ENCODE measurements at regions of chr14 and their contacts with region 1.

Region 1: GRCh38 chr14:69574263-69574953 is at the start of gene CCDC177:
- DNase-seq: peak; percentile 51
- H3K4me3 ChIP-seq: no peak within 1 kb of the TSS
- H3K27ac ChIP-seq: no peak within 1 kb of the TSS
- H3K4me1 ChIP-seq: peaks cover 9% of the 10 kb centered on the region
- H3K27me3 ChIP-seq: peaks cover 53 to 78% of the 10 kb centered on the region in 2 experiments
- CTCF ChIP-seq: peak; percentile 77 to 84
- POLR2A ChIP-seq: no peak
- total RNA-seq, gene CCDC177: not detected in 2 replicates

Region 2: GRCh38 chr14:69242311-69243224 is 331.8 kb before region 1 on chr14:
- CTCF ChIA-PET with region 1: interaction called, 22 read pairs
- POLR2A ChIA-PET with region 1: no interaction called
- dilution Hi-C with region 1: no loop called
- intact Hi-C with region 1: loop called (anchors 1 kb)
- DNase-seq: peak; percentile 71
- H3K4me3 ChIP-seq: no peak overlapping the region
- H3K27ac ChIP-seq: no peak overlapping the region
- H3K4me1 ChIP-seq: no peaks in the 10 kb centered on the region
- H3K27me3 ChIP-seq: no peaks in the 10 kb centered on the region
- CTCF ChIP-seq: peak; percentile 59 to 60
- POLR2A ChIP-seq: no peak

Region 3: DNA sequence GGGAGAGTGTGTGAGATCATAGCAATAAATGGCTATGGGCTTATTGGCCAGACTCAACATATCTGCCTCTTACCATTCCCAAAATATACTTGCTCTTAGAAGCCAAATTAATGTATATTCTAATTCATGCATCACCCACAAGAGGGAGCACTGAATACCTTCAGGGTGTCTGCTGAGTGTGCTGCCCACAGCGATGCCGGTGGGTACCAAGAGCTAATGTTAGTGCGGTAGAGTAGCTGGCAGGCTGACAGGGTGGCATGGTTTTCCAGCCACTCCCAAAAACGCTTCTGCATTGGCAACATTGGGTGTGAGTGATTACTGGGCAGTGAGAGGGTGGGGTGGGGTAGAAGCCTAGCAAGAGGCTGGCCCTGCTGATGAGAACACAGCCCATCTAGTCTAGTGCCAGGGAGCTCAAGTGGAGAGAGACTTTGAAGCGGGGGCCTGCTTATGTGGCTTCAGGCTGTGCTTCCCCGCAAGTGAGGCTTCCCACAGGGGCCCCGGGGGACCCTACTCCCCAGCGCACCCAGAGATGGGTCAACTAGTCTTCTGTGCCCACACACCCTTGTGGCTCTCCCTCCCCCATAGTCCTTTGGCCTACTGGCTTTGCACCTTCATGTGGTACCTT is 99.1 kb before region 1 on chr14:
- CTCF ChIA-PET with region 1: interaction called, 14 read pairs
- POLR2A ChIA-PET with region 1: no interaction called
- dilution Hi-C with region 1: no loop called
- intact Hi-C with region 1: loop called (anchors 1 kb)
- DNase-seq: peak; percentile 25
- H3K4me3 ChIP-seq: no peak overlapping the region
- H3K27ac ChIP-seq: no peak overlapping the region
- H3K4me1 ChIP-seq: no peaks in the 10 kb centered on the region
- H3K27me3 ChIP-seq: peaks cover 0 to 3% of the 10 kb centered on the region in 2 experiments
- CTCF ChIP-seq: peak; percentile 25 to 34
- POLR2A ChIP-seq: no peak

Region 4: DNA sequence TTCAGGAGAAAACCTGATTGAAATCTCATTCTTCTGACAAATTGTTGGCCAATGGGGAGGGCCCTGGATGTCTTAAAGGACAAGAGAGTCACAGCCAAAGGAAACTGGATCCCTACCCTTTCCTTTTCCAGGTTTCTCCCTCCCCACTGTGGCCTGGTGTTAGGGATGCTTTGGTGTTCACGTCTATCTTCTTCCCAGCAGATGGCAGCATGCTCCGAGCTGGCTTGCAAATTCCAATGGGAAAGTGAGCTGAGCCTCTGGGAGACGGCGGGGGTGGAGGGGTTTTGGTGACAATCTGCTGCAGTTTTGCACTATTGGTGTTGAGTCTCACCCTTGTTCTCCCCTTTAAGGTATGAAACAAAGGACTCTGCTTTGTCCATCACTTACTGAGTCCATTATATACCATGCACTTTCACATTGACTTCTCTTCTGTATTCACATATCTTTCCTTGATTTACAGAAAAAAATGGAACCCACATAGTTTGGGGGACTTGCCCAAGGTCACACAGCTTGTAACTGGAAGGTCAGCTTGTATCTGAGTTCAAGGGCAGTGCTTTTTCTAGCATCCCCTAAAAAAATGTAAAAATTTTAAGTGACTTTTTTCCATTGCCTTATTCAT is 39.1 kb before region 1 on chr14:
- CTCF ChIA-PET with region 1: interaction called, 59 read pairs
- POLR2A ChIA-PET with region 1: no interaction called
- dilution Hi-C with region 1: no loop called
- intact Hi-C with region 1: loop called (anchors 1 kb)
- DNase-seq: peak; percentile 34
- H3K4me3 ChIP-seq: no peak overlapping the region
- H3K27ac ChIP-seq: no peak overlapping the region
- H3K4me1 ChIP-seq: no peaks in the 10 kb centered on the region
- H3K27me3 ChIP-seq: peaks cover 18 to 26% of the 10 kb centered on the region in 2 experiments
- CTCF ChIP-seq: peak; percentile 61 to 83
- POLR2A ChIP-seq: no peak

Region 5: DNA sequence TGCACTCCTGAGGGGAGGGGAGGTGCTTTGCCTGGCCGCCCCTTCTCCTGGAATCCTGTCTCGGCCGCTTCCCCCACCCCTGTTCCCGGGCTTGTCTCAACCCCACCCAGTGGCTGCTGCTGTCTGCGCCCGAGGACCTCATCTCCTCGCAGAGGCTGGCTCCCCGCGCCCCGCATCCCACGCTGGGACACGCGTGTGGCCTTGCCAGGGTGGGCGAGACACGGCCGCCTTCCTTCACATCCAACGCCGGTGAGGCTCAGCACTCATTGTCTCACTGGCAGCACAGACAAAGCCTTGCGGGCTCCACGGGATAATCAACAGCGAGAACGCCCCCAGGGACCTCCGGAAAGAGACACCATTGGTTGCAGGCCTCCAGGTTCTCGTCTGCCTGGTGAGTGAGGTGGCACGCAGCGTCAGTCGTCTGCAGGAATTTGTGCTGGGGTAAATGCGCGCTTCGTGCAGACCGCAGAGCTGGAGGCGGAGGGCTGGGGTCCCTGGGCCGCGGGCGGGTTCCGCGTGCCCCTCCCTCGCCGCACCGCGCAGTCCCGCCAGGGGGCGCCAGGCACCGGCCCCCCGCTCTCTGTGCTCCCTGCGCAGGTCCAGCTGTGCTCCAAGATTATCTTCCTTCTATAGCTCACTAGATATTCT is 26.6 kb before region 1 on chr14:
- CTCF ChIA-PET with region 1: interaction called, 26 read pairs
- POLR2A ChIA-PET with region 1: no interaction called
- dilution Hi-C with region 1: no loop called
- intact Hi-C with region 1: no loop called
- DNase-seq: no peak
- H3K4me3 ChIP-seq: no peak overlapping the region
- H3K27ac ChIP-seq: no peak overlapping the region
- H3K4me1 ChIP-seq: no peaks in the 10 kb centered on the region
- H3K27me3 ChIP-seq: peaks cover 4 to 14% of the 10 kb centered on the region in 2 experiments
- CTCF ChIP-seq: peak; percentile 76 to 77
- POLR2A ChIP-seq: no peak

Region 6: GRCh38 chr14:69559581-69560011 is 14.8 kb before region 1 on chr14:
- CTCF ChIA-PET with region 1: interaction called, 11 read pairs
- POLR2A ChIA-PET with region 1: no interaction called
- dilution Hi-C with region 1: no loop called
- intact Hi-C with region 1: no loop called
- DNase-seq: no peak
- H3K4me3 ChIP-seq: no peak overlapping the region
- H3K27ac ChIP-seq: no peak overlapping the region
- H3K4me1 ChIP-seq: no peaks in the 10 kb centered on the region
- H3K27me3 ChIP-seq: peaks cover 18 to 24% of the 10 kb centered on the region in 2 experiments
- CTCF ChIP-seq: no peak
- POLR2A ChIP-seq: no peak

Region 7: DNA sequence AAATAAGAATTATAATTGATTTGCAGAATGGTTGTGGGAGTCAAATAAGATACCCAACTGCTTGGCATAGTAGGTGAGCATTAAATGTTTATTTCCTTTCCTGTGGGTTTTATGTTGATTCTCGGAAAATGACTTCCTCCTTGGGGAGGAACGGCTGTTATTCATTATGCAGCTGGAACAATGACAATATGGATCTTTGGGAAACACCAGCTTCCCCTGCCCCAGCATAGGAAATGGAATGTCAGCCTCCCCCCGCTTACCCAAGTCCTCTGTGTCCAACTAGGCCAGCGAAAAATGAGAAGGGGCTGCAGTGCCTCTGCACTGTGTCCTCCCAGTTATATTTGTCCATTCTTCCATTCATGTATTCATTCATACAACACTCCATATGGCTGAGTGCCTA is 12.0 kb after region 1 on chr14:
- CTCF ChIA-PET with region 1: interaction called, 16 read pairs
- POLR2A ChIA-PET with region 1: no interaction called
- dilution Hi-C with region 1: no loop called
- intact Hi-C with region 1: no loop called
- DNase-seq: peak; percentile 90
- H3K4me3 ChIP-seq: no peak overlapping the region
- H3K27ac ChIP-seq: no peak overlapping the region
- H3K4me1 ChIP-seq: peaks cover 20% of the 10 kb centered on the region
- H3K27me3 ChIP-seq: no peaks in the 10 kb centered on the region
- CTCF ChIP-seq: no peak
- POLR2A ChIP-seq: no peak

Region 8: DNA sequence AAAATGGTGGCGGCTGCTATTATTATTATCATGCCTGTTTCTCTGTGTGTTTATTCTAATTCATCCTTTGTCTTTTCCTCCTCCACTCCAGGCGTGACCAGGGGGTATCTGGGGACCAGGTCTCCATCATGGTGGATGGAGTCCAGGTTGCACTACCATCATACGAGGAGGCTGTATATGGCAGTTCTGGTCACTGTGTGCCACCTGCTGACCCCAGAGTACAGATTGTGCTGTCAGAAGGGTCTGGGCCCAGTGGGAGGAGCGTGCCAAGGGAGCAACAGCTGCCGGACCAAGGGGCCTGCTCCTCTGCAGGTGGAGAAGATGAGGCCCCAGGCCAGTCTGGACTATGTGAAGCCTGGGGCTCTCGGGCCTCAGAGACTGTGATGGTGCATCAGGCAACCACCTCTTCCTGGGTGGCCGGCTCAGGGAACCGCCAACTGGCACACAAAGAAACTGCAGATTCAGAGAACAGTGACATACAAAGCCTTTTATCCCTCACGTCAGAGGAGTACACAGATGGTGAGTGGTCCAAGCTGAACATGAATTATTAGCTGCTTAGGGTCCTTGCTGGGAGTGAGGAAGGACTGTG is 134.3 kb after region 1 on chr14:
- CTCF ChIA-PET with region 1: no interaction called
- POLR2A ChIA-PET with region 1: no interaction called
- dilution Hi-C with region 1: no loop called
- intact Hi-C with region 1: no loop called
- DNase-seq: no peak
- H3K4me3 ChIP-seq: no peak overlapping the region
- H3K27ac ChIP-seq: no peak overlapping the region
- H3K4me1 ChIP-seq: peaks cover 22% of the 10 kb centered on the region
- H3K27me3 ChIP-seq: no peaks in the 10 kb centered on the region
- CTCF ChIP-seq: no peak
- POLR2A ChIP-seq: no peak